Tibial artery (tissue), 4 donors: ENCODE measurements at regions of chr20 and their contacts with region 1.

Region 1: GRCh38 chr20:32357869-32358631 is at the start of gene ASXL1:
- DNase-seq: peak; percentile 94 to 98
- H3K4me3 ChIP-seq: peak within 1 kb of the TSS; percentile 60 to 90
- H3K27ac ChIP-seq: peak within 1 kb of the TSS; percentile 87 to 97
- H3K4me1 ChIP-seq: peaks cover 0 to 51% (median 27%) of the 10 kb centered on the region in 4 donors
- H3K27me3 ChIP-seq: no peaks in the 10 kb centered on the region
- CTCF ChIP-seq: peak; percentile 13 to 16

Region 2: DNA sequence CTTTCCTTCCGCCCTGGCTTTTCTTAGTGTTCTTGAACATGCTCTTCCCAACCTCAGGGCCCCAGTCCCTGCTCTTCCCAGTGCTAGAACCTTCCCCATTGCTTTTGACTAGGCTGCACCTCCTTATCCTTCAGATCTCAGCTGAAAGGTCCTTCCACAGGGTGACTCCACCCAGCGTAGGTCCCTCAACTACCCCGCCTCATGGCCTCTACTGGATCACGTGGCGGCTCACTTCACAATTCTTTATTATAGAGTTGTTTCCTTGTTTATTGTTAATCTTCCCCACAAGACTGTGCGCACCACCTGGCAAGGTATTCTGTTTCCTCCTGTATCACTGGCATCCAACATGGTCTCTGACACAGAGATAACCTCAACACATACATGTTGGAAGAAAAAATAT is 456.4 kb before region 1 on chr20:
- intact Hi-C with region 1: no loop called
- DNase-seq: no peak
- H3K4me3 ChIP-seq: no peak overlapping the region
- H3K27ac ChIP-seq: no peak overlapping the region
- H3K4me1 ChIP-seq: no peaks in the 10 kb centered on the region
- H3K27me3 ChIP-seq: no peaks in the 10 kb centered on the region
- CTCF ChIP-seq: no peak

Region 3: DNA sequence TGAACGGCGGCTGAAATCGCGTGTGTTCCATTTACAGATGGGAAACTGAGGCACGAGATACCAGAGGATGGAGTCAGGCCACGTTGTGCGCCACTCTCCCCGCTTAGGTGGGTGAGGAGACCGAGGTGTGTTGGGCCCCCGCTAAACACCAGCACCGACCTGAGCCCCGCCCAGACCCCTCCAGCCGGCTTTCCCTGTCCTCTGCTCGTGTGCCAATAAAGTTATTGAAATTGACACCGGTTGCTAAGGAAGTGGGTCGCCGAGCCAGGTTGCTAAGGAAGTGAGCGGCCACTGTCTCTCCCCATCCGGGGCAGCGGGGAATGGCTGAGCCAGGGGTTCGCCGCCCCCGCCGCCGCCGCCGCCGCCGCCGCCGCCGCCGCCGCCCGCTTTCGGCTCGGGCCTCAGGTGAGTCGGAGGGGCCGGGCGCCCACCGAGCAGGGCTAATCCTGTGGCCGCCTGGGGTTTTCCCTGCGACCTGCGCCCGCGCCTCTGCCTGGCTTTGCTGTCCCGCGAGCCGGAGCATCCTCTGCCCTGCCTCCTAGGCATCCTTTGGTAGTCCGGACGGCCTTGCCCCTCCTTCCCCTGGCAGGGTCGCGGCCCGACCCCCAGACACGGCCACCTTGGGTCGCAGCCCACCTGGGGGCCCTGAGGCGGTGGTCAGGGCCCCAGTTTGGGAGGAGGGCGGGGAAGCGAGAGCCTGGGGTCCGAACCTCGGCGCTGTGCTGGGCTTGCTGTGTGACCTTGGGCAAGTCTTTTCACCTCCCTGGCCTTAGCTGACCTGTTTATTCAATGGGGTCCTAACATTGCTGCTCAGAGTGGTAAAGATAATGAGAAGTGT is 80.5 kb before region 1 on chr20 and contains the start of gene KIF3B:
- intact Hi-C with region 1: no loop called
- DNase-seq: peak; percentile 87 to 91
- H3K4me3 ChIP-seq: peak within 1 kb of the TSS; percentile 79 to 85
- H3K27ac ChIP-seq: peak within 1 kb of the TSS; percentile 76 to 79
- H3K4me1 ChIP-seq: peaks cover 0 to 22% (median 13%) of the 10 kb centered on the region in 4 donors
- H3K27me3 ChIP-seq: peaks cover 0 to 2% of the 10 kb centered on the region in 2 donors
- CTCF ChIP-seq: no peak

Region 4: GRCh38 chr20:32315891-32316290 is 42.2 kb before region 1 on chr20:
- intact Hi-C with region 1: no loop called
- DNase-seq: no peak
- H3K4me3 ChIP-seq: no peak overlapping the region
- H3K27ac ChIP-seq: no peak overlapping the region
- H3K4me1 ChIP-seq: no peaks in the 10 kb centered on the region
- H3K27me3 ChIP-seq: no peaks in the 10 kb centered on the region
- CTCF ChIP-seq: no peak

Region 5: GRCh38 chr20:32325706-32326503 is 32.1 kb before region 1 on chr20:
- intact Hi-C with region 1: loop called (anchors 1 kb)
- DNase-seq: no peak
- H3K4me3 ChIP-seq: no peak overlapping the region
- H3K27ac ChIP-seq: no peak overlapping the region
- H3K4me1 ChIP-seq: no peaks in the 10 kb centered on the region
- H3K27me3 ChIP-seq: no peaks in the 10 kb centered on the region
- CTCF ChIP-seq: no peak

Region 6: DNA sequence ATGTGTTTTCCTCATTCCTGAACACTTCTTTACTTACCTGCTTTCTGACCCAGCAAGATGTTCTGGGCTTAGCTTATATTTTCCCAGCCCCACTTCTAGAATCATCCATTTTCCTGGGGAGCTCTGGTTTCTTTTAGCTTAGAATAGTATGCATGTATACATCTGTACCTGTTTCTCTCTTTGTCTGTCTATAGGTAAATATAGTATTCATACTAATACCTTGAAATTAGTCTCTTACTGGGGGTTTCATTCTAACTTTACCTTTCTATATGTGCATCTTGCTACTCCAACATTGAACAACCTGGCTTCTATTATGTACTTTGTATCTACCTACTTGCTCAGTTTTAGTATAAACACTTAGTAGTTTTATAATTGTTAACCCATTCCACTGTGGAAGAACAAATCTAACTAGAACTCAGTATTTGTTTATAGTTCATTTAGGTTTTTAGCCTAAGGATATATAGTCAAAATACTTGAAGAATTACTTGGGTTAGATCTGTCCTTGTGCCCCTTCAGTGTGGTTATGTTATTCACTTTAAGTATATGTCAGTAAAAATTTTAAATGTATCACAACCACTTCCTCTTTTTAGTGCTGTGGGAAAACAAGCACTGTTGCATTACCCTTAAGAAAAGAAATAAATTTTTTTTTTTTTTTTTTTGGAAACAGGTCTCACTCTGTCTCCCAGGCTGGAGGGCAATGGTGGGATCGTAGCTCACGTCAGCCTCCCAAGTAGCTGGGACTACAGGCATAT is 54.1 kb after region 1 on chr20:
- intact Hi-C with region 1: no loop called
- DNase-seq: no peak
- H3K4me3 ChIP-seq: no peak overlapping the region
- H3K27ac ChIP-seq: no peak overlapping the region
- H3K4me1 ChIP-seq: peaks cover 0 to 14% (median 4%) of the 10 kb centered on the region in 4 donors
- H3K27me3 ChIP-seq: no peaks in the 10 kb centered on the region
- CTCF ChIP-seq: no peak

Region 7: GRCh38 chr20:32483351-32484224 is 125.5 kb after region 1 on chr20:
- intact Hi-C with region 1: loop called (anchors 2 kb)
- DNase-seq: peak in 1 of 2 donors; percentile 38
- H3K4me3 ChIP-seq: peak overlapping the region; percentile 75 to 82
- H3K27ac ChIP-seq: peak overlapping the region; percentile 38 to 61
- H3K4me1 ChIP-seq: peaks cover 0 to 35% (median 18%) of the 10 kb centered on the region in 4 donors
- H3K27me3 ChIP-seq: no peaks in the 10 kb centered on the region
- CTCF ChIP-seq: no peak